Heart right ventricle (tissue), 16 donors: ENCODE measurements at regions of chr18 and their contacts with region 1.

Region 1: GRCh38 chr18:10442551-10442971 is 11.9 kb upstream of the APCDD1 start:
- DNase-seq: no peak
- ATAC-seq: peak in 6 of 8 donors; percentile 59 to 81 (median 63)
- H3K4me3 ChIP-seq: no peak overlapping the region
- H3K27ac ChIP-seq: no peak overlapping the region
- H3K4me1 ChIP-seq: no peaks in the 10 kb centered on the region
- H3K27me3 ChIP-seq: no peaks in the 10 kb centered on the region
- CTCF ChIP-seq: peak in 5 of 9 donors; percentile 18 to 48 (median 38)

Region 2: DNA sequence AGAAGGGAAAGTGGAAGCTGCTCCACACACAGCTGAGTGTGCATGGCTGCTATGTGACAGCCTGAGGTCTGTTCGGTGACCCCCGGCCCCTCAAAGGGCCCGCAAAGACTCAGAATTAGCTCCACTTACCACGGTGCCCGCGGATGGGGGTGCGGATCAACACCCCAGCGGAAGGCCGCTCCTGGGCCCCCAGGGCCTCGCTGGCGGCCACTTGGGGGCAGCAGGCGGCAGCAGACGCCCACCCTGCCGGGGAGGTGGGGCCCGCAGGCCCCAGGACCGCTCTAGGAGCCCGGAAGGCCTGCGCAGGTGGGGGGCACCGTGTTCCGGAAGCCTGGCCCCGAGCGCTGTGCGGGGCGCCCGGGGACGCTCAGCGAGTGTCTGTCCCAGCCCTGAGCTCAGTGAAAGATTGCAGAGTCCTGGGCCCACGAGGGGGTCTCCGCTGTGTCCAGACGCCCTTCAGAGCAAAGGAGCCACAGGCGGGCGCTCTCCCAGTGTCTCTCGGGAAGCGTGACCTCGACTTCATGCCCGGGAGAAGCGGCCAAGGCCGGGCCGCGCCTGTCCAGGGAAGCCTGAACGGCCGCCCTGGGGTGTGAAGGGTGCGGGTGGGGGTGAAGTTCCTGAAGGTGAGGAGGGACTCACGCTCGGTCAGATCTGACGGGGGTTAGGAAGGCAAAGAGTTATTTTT is 410.1 kb before region 1 on chr18:
- intact Hi-C with region 1: loop called in 1 of 10 experiments (anchors 10 kb)
- DNase-seq: peak in 1 of 2 donors; percentile 45
- ATAC-seq: peak; percentile 68 to 87 (median 82)
- H3K4me3 ChIP-seq: peak overlapping the region in 9 of 10 donors; percentile 13 to 50 (median 38)
- H3K27ac ChIP-seq: peak overlapping the region in 6 of 10 donors; percentile 14 to 75 (median 54)
- H3K4me1 ChIP-seq: peaks cover 0 to 21% (median 13%) of the 10 kb centered on the region in 9 donors
- H3K27me3 ChIP-seq: no peaks in the 10 kb centered on the region
- CTCF ChIP-seq: peak; percentile 39 to 73 (median 60)

Region 3: DNA sequence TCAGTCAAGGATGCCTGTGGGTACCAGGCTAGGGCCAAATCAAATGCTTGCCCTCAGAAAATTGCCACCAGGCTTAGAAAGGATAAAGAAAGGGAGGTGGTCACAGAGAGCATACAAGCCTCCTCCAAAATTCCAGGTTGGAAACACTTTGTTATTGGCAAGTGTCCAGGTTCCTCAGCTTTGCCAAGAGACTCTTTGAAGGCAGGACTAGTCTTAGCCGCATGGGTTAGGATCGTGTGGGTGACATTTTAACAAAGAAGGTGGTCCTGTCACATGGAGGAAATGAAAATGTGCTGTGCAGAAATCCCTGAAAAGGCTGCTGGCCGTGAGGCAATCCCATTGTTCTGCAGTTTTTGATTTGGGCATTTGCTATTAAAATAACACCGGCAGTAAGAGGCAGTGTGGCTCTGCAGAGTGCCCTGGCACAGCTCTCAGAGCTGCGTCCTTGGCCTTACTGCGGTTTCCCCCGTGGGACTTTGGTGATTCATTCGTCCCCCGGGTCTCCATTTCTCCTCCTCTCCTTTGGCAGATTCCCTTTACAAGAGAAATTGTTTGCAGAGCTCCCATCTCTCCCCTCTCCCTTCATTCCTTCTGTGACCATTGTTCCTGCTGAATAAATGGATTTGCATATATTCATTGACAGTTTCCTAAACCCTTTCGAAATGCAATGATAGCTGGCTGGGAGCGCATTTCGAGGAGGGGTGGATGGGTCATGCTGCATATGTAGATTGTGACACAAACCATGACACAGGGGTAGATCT is 341.4 kb before region 1 on chr18:
- intact Hi-C with region 1: loop called in 1 of 10 experiments (anchors 5 kb)
- DNase-seq: peak in 1 of 2 donors; percentile 17
- ATAC-seq: peak in 6 of 8 donors; percentile 44 to 84 (median 70)
- H3K4me3 ChIP-seq: no peak overlapping the region
- H3K27ac ChIP-seq: no peak overlapping the region
- H3K4me1 ChIP-seq: peaks cover 0 to 18% (median 11%) of the 10 kb centered on the region in 9 donors
- H3K27me3 ChIP-seq: no peaks in the 10 kb centered on the region
- CTCF ChIP-seq: peak in 1 of 9 donors; percentile 9

Region 4: GRCh38 chr18:10482985-10483949 is 40.7 kb after region 1 on chr18:
- intact Hi-C with region 1: loop called in 1 of 10 experiments (anchors 5 kb)
- DNase-seq: peak in 1 of 2 donors; percentile 50
- ATAC-seq: peak in 7 of 8 donors; percentile 52 to 84 (median 72)
- H3K4me3 ChIP-seq: no peak overlapping the region
- H3K27ac ChIP-seq: peak overlapping the region in 2 of 10 donors; percentile 36 to 50
- H3K4me1 ChIP-seq: peaks cover 0 to 23% (median 5%) of the 10 kb centered on the region in 9 donors
- H3K27me3 ChIP-seq: no peaks in the 10 kb centered on the region
- CTCF ChIP-seq: no peak